Common myeloid progenitor, CD34-positive (primary cell): ENCODE measurements at regions of chr11 and their contacts with region 1.

Region 1: DNA sequence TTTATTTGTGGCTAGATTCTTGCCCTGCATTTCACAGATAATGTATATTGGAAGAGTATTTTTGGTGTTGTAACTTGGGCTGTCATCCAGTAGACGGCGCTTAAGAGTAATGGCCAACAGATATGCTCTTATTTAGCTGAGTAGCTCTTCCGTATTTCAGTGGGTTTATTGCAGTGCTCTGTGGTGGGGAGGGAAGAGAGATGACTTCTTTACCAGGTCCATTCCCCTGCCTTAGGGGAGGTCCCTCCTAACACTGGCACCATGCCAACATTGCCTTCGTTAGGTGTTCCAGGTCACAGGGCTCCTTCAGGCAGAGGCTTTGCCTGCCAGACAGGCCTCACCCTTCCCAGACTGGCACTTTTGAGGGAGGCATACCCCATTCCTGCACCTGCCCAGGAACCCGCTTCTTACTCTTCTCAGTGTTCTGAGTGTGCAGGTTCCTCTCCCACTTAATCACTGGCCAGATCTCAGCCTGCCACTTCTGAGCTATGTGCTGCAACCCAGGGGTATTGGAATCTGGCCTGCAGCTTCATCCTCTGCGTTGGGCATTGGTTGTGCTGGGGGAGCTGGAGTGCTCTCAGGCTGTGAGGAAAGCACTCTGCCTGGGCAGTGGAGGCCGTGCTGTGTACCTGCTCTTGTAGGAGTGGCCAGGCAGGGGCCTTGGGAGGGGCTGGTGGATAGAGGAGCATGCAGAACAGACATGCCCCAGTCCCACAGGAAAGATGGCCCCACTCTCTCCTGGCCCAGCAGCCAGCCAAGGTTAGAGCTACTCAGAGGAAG is 29.4 kb upstream of the SLN start:
- DNase-seq: peak; percentile 42 to 69 (median 67)
- H3K4me3 ChIP-seq: no peak overlapping the region
- H3K27ac ChIP-seq: no peak overlapping the region
- H3K4me1 ChIP-seq: no peaks in the 10 kb centered on the region
- H3K27me3 ChIP-seq: no peaks in the 10 kb centered on the region

Region 2: GRCh38 chr11:107651672-107652071 is 89.6 kb before region 1 on chr11:
- CTCF ChIA-PET with region 1: no interaction called
- POLR2A ChIA-PET with region 1: no interaction called
- DNase-seq: peak in 2 of 3 donors; percentile 13 to 17
- H3K4me3 ChIP-seq: no peak overlapping the region
- H3K27ac ChIP-seq: no peak overlapping the region
- H3K4me1 ChIP-seq: peaks cover 0 to 6% (median 1%) of the 10 kb centered on the region in 4 experiments
- H3K27me3 ChIP-seq: peaks cover 2 to 13% (median 5%) of the 10 kb centered on the region in 5 experiments

Region 3: GRCh38 chr11:107713009-107713408 is 28.2 kb before region 1 on chr11:
- CTCF ChIA-PET with region 1: no interaction called
- POLR2A ChIA-PET with region 1: no interaction called
- DNase-seq: peak in 1 of 3 donors; percentile 6
- H3K4me3 ChIP-seq: no peak overlapping the region
- H3K27ac ChIP-seq: no peak overlapping the region
- H3K4me1 ChIP-seq: no peaks in the 10 kb centered on the region
- H3K27me3 ChIP-seq: peaks cover 0 to 16% (median 4%) of the 10 kb centered on the region in 5 experiments

Region 4: DNA sequence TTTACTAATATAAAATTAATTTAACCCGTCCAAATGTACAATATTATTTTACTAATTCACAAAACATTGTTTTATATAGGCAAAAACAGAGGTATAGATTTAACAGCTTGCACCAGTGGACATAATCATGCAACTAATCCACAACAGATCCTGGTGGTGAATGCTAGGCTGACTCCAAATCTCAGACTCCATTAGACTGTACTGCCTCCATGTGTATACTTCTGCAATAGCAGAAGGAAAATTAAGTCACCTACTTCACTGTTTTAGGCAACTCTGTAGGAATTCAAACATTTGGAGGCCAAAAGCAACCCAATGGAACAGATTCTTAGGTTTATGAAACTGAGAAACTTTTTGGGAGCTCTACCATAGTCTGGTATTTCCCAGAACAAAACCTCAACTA is 157.0 kb after region 1 on chr11:
- CTCF ChIA-PET with region 1: interaction called, 14 read pairs
- POLR2A ChIA-PET with region 1: no interaction called
- DNase-seq: peak; percentile 41 to 76 (median 72)
- H3K4me3 ChIP-seq: no peak overlapping the region
- H3K27ac ChIP-seq: no peak overlapping the region
- H3K4me1 ChIP-seq: no peaks in the 10 kb centered on the region
- H3K27me3 ChIP-seq: no peaks in the 10 kb centered on the region